ENCODE measurements at regions of chr9 and their contacts with region 1.

Region 1: DNA sequence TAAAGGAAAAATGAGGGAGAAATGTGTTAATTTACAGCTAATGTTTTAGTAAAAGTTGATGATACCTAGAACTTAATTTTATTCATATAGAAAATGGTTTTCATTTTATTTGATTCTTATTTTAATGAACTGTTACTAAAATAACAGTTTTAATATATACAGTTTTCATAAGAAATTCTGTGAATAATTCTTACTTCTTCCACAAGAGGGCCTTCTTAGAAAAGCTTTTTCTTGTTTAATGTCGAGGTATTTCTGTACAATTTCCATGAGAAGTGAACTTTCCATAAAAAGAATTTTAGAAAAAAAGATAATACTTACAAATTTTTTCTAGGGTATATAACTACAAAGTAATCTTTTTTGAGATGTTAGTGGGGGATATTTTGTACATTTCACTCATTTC is 73.9 kb downstream of the KLF9 start:
- DNase-seq: peak; percentile 72
- H3K4me3 ChIP-seq: no peak overlapping the region
- H3K27ac ChIP-seq: 0 out of 2 replicates have a peak overlapping the region, but pooled peaks have one; percentile 3
- H3K4me1 ChIP-seq: no peaks in the 10 kb centered on the region
- H3K27me3 ChIP-seq: no peaks in the 10 kb centered on the region

Region 2: DNA sequence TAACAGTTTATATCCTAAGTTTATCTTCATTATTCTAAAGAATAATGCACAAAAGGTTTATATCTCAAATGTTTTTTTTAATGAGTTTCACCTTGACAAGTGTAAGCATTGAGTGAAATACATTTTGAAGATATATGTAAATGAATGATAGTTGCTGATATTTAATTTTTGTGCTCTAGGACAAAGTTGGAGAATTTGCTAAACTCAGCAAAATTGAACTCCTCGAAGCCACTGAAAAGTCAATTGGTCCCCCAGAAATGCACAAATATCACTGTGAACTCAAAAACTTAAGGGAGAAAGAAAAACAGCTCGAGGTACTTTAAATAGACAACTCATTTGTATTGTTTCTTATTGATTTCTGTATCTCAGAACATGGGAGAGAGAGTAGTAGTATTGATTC is 62.3 kb before region 1 on chr9:
- in situ Hi-C with region 1: no loop called
- DNase-seq: no peak
- H3K4me3 ChIP-seq: no peak overlapping the region
- H3K27ac ChIP-seq: no peak overlapping the region
- H3K4me1 ChIP-seq: 0 out of 2 replicates have a peak, but pooled peaks cover 4% of the 10 kb centered on the region
- H3K27me3 ChIP-seq: no peaks in the 10 kb centered on the region

Region 3: GRCh38 chr9:70484210-70485130 is 143.9 kb after region 1 on chr9:
- in situ Hi-C with region 1: loop called (anchors 10 kb)
- DNase-seq: peak; percentile 85
- H3K4me3 ChIP-seq: no peak overlapping the region
- H3K27ac ChIP-seq: 0 out of 2 replicates have a peak overlapping the region, but pooled peaks have one; percentile 1
- H3K4me1 ChIP-seq: peaks cover 39% of the 10 kb centered on the region
- H3K27me3 ChIP-seq: no peaks in the 10 kb centered on the region

Region 4: GRCh38 chr9:70801181-70801829 is 460.7 kb after region 1 on chr9:
- in situ Hi-C with region 1: no loop called
- DNase-seq: no peak
- H3K4me3 ChIP-seq: no peak overlapping the region
- H3K27ac ChIP-seq: no peak overlapping the region
- H3K4me1 ChIP-seq: no peaks in the 10 kb centered on the region
- H3K27me3 ChIP-seq: no peaks in the 10 kb centered on the region; the same call in 1 of the 2 replicates

Measured in GM23248 (cell line).